ENCODE measurements at regions of chr7 and their contacts with region 1.

Region 1: GRCh38 chr7:97027427-97028234 is 3.0 kb upstream of the DLX5 start:
- DNase-seq: peak; percentile 75
- H3K4me3 ChIP-seq: peak overlapping the region in 1 of 2 donors; percentile 7
- H3K27ac ChIP-seq: no peak overlapping the region
- H3K4me1 ChIP-seq: no peaks in the 10 kb centered on the region
- H3K27me3 ChIP-seq: peaks cover 2% of the 10 kb centered on the region
- CTCF ChIP-seq: peak; percentile 44 to 84 (median 82)
- POLR2A ChIP-seq: no peak

Region 2: GRCh38 chr7:95916573-95917297 is 1110.9 kb before region 1 on chr7:
- intact Hi-C with region 1: loop called (anchors 5 kb)
- DNase-seq: peak; percentile 78
- H3K4me3 ChIP-seq: no peak overlapping the region
- H3K27ac ChIP-seq: no peak overlapping the region
- H3K4me1 ChIP-seq: no peaks in the 10 kb centered on the region
- H3K27me3 ChIP-seq: no peaks in the 10 kb centered on the region
- CTCF ChIP-seq: peak; percentile 82 to 94 (median 85)
- POLR2A ChIP-seq: no peak

Region 3: GRCh38 chr7:96075510-96076349 is 951.9 kb before region 1 on chr7:
- intact Hi-C with region 1: loop called (anchors 2 kb)
- DNase-seq: peak; percentile 45
- H3K4me3 ChIP-seq: peak overlapping the region; percentile 22 to 34
- H3K27ac ChIP-seq: no peak overlapping the region
- H3K4me1 ChIP-seq: no peaks in the 10 kb centered on the region
- H3K27me3 ChIP-seq: no peaks in the 10 kb centered on the region
- CTCF ChIP-seq: peak; percentile 58 to 74 (median 66)
- POLR2A ChIP-seq: no peak

Region 4: DNA sequence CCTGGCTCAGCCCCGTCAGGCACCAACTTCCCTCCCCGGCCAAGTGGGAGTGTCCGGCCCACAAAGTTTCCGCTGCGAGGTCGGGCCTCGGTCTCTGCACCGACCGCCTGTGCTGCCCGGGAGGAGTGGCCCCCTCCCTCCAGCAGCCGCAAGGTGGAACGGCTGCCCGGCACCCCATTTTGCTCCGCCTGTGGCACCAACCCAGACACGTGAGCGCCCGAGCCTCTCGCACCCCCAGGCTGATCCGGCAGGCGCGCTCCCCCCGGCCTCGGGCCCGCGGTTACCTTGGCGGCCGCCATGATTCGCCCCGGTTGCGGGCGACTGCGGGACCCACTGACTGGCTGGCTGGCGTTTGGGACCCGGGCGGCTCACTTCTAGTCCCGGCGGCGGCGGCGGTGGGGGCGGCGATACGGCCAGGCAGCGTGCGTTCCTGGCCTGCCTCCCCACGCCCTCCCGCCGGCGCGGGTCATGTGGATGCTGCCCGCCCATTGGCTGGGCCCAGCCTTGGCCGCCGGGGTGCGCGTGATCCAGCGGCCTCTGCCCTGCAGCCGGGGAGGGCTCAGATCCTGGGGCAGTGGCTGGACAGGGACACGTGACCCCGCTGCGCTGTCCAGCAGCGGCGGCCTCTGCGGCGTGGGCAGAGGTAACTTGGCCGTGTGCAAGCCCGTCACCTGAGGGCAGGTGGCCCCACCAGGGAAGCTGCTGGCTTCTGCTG is 705.8 kb before region 1 on chr7 and contains the start of gene SLC25A13:
- intact Hi-C with region 1: loop called (anchors 10 kb)
- DNase-seq: peak; percentile 77
- H3K4me3 ChIP-seq: peak within 1 kb of the TSS; percentile 87 to 89
- H3K27ac ChIP-seq: peak within 1 kb of the TSS; percentile 93 to 96
- H3K4me1 ChIP-seq: peaks cover 2% of the 10 kb centered on the region
- H3K27me3 ChIP-seq: no peaks in the 10 kb centered on the region
- CTCF ChIP-seq: peak in 1 of 4 experiments; percentile 4
- POLR2A ChIP-seq: peak; percentile 65
- total RNA-seq, gene SLC25A13: 14.4 to 41.6 TPM

Measured in prostate gland (tissue), 2 donors.